Activated CD8-positive, alpha-beta T cell treated with anti-CD3 and anti-CD28 coated beads, Interleukin-2, amount 10 ng/mL, durations not matched to agents 7 days and 5 days (primary cell): ENCODE measurements at regions of chr17 and their contacts with region 1.

Region 1: DNA sequence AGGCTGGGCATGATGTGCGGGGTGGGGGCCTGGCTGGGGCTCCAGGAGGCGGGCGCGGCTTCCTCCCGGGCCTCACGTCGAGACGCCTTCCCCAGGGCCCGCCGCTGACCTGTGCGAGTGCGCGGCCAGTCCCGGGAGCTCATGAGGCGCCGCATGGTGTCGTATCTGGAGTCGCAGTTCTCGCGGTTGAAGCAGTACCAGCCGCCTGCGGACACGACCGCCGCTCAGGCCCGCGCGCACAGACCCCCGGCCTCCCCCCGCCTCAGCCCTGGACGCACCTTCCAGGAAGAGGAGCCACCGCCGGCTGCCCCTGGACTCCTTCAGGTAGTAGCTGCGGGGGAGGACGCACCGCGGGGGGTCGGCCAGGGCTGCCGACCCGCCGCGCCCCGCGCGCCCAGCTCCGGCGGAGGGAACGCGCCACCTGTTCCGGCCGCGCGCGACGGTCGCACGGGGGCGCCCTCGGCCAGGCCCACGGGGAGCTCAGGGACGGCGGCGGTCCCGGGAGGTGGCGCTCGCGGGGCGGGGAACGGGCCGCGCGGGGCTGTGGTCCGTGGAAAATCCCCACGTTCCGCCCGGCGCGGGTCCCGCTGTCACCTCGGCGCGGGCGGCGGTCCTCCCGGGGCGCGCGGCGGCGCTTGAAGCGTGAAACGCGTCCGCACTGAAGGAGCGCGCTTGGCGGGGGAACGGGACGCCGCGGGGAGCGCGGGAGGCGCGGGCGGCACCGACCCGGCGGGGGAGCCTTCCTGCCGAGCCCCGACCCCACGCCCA is 1.4 kb downstream of the NOTUM start:
- DNase-seq: peak; percentile 80
- ATAC-seq: peak; percentile 97
- H3K4me3 Mint-ChIP-seq: no peak overlapping the region
- H3K27ac Mint-ChIP-seq: no peak overlapping the region
- H3K4me1 Mint-ChIP-seq: peaks cover 7% of the 10 kb centered on the region
- H3K27me3 Mint-ChIP-seq: peaks cover 40% of the 10 kb centered on the region

Region 2: GRCh38 chr17:82022981-82023374 is 63.4 kb after region 1 on chr17 and contains the start of gene LRRC45:
- CTCF ChIA-PET with region 1: interaction called, 138 read pairs
- POLR2A ChIA-PET with region 1: interaction called, 12 read pairs
- DNase-seq: peak; percentile 100
- ATAC-seq: peak; percentile 96
- H3K4me3 Mint-ChIP-seq: peak within 1 kb of the TSS; percentile 89
- H3K27ac Mint-ChIP-seq: peak within 1 kb of the TSS; percentile 83
- H3K4me1 Mint-ChIP-seq: peaks cover 43% of the 10 kb centered on the region
- H3K27me3 Mint-ChIP-seq: no peaks in the 10 kb centered on the region
- total RNA-seq, gene LRRC45: 58.3 to 58.9 TPM